GM10248 (cell line): ENCODE measurements at regions of chr11 and their contacts with region 1.

Region 1: DNA sequence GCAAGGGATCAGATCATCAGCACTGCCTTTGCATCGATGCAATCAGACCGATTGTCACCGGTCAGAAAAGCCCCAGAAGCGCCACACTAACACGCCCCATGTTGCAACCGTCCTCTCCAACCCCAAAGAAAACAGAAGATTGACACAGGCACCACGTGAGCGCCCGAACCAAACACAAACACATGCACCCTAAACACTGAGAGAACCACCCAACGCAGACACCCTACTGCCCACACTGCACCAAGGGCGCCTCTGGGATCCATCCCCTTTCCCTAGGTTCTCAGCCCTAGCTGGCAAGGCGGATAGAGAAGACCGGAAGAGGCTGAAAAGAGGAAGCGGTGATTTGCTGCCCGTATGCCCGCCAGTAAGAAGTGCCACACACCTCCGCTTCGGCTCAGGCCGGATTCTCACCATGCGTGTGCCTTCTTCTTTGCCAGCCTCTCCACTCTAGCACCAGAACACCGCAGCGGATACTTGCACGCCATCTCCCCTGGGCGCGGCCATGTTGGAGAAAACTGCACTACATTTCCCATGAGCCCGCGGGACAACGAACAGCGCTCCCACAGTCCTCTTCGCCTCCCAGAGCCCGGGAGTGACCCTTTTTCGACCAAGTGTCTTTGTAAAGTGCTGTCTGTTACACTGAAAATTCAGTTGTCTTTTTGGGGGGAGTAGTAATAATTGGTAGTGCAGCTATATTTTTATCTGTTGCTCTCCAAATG is at the start of gene ALKBH8:
- DNase-seq: peak; percentile 74
- CTCF ChIP-seq: no peak

Region 2: DNA sequence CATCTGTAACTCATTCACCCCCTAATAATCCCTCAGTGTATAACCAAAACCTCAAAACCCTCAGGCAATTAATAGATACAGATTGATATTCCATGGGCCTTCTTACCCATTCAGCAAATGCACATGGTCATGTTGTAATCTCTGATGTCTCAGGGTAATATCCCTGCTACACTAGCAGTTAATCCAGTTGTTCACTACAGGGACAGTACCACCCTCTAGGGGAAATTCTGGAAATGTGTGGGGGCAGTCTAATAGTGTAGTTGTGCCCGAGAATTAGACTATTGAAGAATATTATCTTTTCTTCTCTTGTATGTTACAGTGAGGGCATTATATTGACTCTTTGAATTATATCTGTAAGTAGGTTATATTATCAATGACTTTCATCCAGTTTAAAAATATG is 283.2 kb before region 1 on chr11:
- CTCF ChIA-PET with region 1: no interaction called
- POLR2A ChIA-PET with region 1: no interaction called
- DNase-seq: no peak
- CTCF ChIP-seq: no peak

Region 3: DNA sequence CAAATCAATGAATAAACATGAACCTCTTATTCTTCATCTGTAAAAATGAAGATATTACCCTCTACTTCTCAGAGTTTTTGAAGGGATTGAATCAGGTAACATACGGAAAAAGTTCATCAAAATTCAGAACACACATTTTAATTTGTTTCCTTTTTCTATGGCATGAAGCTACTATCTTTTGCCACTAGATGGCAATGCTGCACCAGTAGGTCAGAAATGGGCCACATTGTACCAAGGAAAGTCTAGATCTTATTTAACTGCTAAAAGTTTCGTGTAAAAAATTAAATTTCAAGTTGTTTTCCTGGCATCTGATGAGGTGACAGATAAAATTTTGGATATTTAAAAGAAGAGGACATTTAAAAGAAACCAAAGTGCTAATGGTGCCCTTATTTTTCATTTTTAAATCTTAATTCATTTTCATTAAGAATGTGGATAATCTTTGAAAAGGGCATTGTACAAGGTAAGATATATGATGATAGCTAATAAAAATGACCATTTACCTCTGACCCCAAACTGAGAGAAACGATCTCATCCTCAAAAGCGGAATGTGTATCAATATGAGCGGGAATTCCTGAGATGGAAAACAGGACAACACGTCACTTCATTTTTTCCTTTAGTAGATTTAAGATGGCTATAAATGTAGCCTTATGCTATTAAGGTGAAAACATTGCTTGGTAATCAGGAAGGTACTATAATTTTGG is 16.0 kb before region 1 on chr11:
- CTCF ChIA-PET with region 1: interaction called, 157 read pairs
- POLR2A ChIA-PET with region 1: no interaction called
- DNase-seq: peak; percentile 35
- CTCF ChIP-seq: peak; percentile 85

Region 4: DNA sequence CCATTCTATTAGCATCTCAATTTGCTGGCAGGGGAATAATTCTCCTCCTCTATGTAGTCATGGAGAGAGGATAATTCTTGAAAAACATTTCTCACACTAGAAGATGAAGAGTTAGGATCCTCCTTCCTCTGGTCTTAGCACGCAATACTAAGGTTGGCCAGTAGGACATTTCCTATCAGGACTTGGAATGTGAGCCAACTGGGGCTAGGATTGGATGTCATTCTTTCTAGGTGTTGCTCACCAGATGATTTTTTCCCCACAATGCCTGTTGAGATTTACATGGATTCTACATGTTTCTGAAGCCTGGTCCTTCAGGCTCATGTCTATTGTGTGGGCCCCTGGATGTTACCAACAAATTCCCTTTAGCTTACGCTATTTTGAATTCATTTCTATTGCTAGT is 118.4 kb after region 1 on chr11:
- CTCF ChIA-PET with region 1: interaction called, 55 read pairs
- POLR2A ChIA-PET with region 1: interaction called, 3 read pairs
- DNase-seq: no peak
- CTCF ChIP-seq: no peak